GM10248 (cell line): ENCODE measurements at regions of chr11 and their contacts with region 1.

Region 1: DNA sequence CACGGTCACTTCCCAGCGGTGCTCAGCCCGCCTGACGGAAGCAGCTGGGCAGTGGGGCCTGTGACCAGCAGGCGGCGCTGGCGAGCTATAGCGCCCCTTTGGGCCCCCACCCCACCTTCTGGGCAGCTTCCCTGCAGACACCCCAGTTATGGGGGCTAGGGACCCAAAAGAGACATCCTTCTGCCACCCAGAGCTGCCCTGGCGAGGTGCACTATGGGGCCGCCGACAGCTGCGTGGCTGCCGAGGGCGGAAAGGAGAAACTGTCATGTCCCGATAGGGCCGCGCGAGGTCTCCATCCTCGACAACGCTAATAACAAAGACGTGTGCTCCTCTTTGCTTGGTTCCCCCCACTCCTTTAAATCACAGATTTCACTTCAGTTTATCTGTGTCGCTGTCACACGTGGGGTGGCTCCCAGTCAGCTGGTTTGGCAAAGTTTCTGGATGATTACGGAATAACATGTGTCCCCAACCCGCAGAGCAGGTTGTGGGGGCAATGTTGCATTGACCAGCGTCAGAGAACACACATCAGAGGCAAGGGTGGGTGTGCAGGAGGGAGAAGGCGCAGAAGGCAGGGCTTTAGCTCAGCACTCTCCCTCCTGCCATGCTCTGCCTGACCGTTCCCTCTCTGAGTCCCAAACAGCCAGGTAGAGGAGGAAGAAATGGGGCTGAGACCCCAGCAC is 674 bp upstream of the MYO7A start:
- DNase-seq: peak; percentile 78
- CTCF ChIP-seq: peak; percentile 98

Region 2: DNA sequence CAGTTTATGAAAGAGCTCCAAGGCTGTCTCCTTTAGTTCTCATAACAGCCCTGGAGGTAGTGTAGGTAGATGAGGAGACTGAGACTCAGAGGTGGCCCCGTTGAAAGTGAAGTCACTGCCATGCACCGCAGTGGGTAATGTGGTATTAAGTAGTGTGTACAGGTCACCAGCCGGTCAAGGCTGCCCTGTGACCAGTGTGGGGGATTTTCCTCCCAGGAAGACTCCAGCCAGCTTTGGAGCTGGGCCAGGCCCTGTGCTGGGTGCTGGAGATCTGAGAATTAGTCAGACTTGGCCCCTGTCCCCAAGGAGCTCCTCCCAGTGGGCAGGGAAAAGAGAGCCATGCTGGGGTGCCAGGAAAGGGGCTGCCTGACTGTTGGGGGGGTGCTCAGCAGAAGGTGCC is 19.4 kb before region 1 on chr11:
- CTCF ChIA-PET with region 1: interaction called, 57 read pairs
- POLR2A ChIA-PET with region 1: no interaction called
- DNase-seq: no peak
- CTCF ChIP-seq: no peak

Region 3: DNA sequence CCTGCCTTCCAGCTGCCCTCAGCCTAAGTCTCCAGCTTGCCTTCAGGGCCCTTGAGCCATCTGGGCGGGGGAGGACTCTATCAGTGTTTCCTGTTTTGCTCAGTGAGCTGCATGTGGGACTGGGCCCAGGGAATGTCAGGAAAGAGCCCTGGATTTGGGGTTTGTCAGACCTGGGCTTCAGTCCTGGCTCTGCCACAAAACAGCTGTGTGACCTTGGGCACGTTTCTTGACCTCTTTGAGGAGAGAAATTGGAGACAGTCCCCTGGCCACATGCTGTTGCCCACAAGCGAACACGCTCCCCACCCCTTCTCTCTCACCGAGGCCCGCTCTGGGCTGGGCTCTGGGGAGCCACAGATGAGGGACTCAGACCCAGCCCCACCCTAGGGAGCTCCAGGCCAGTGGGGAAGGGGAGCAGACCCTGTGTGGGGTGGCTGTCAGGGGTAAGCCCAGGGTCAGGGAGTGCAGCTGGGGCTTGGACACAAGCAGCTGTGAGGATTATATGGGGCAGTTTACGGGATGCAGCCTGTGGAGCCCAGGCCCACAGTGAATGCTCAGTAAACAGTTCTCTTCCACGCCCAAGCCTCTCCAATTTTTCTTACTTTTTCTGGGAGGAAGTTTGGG is 13.0 kb after region 1 on chr11:
- CTCF ChIA-PET with region 1: interaction called, 16 read pairs
- POLR2A ChIA-PET with region 1: no interaction called
- DNase-seq: no peak
- CTCF ChIP-seq: no peak

Region 4: DNA sequence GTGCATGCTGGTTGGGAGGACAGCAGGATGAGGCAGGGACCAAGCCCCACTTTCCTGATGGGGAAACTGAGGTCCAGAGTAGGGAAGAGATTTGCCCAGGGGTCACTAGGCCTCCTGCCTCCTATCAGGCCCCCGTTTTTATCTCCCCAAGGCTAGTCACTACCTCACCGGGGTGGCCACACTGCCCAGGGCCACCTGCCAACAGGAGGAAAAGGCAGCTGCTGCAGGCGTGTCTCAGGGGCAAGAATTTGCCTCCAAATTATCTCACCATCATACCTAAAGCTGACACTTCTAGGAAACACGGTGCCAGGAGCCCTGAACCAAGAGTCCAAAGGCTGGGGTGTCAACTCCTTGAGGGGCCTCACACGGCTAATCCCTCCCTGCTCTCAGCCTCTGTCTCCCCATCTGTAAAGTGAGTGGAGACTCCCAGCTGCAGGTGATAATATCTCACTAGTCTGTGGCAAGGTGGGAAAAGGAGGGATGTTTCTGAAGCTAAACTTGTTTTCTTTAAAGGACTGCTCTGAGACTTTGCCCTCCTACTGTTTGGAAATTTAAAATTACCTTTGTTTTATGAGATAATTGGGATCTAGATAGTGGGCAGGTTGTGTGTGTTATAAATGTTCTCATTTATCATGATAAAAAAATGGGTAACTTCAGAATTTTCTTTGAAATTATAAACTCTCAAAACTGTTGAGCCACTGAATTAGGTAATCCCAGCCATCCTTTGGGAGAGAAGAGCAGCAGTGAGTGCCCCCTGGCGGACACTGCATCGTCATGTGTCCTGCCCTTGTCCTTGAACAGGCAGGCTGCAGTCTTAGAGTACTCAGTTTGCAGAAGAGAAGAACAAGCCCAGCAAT is 60.6 kb after region 1 on chr11:
- CTCF ChIA-PET with region 1: interaction called, 58 read pairs
- POLR2A ChIA-PET with region 1: no interaction called
- DNase-seq: peak; percentile 84
- CTCF ChIP-seq: peak; percentile 92

Region 5: GRCh38 chr11:77547863-77548551 is 420.6 kb after region 1 on chr11:
- CTCF ChIA-PET with region 1: interaction called, 41 read pairs
- POLR2A ChIA-PET with region 1: no interaction called
- DNase-seq: peak; percentile 62
- CTCF ChIP-seq: peak; percentile 58

Region 6: DNA sequence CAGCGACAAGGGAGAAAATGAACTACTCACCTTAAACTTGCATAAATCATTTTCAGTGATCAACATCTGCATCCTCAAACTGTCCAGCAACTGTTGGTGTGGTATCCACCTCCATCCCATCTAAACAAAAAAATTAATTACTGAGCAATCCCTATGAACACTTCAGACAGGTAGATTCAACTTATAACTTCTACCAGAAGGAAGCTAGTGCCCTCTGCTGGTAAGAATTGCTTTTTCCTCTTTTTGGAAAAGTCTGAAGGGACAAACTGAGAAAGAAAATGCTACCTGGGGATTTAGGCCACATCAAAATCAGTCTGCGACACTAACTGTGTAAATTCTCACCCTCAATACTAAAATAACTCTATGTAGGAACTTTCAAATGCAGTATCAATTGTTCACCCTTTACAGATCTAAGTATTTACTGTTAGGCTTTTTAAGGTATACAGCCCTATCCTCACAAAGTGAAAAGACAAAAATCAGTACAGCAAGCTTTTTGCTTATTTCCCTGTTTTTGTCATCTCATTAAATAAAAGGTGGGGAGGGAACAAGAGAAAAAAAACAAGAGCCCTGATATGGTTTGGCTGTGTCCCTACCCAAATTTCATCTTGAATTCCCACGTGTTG is 492.3 kb after region 1 on chr11:
- CTCF ChIA-PET with region 1: interaction called, 19 read pairs
- POLR2A ChIA-PET with region 1: no interaction called
- DNase-seq: peak; percentile 20
- CTCF ChIP-seq: peak; percentile 71